Tibial artery (tissue), 4 donors: ENCODE measurements at regions of chr15 and their contacts with region 1.

Region 1: DNA sequence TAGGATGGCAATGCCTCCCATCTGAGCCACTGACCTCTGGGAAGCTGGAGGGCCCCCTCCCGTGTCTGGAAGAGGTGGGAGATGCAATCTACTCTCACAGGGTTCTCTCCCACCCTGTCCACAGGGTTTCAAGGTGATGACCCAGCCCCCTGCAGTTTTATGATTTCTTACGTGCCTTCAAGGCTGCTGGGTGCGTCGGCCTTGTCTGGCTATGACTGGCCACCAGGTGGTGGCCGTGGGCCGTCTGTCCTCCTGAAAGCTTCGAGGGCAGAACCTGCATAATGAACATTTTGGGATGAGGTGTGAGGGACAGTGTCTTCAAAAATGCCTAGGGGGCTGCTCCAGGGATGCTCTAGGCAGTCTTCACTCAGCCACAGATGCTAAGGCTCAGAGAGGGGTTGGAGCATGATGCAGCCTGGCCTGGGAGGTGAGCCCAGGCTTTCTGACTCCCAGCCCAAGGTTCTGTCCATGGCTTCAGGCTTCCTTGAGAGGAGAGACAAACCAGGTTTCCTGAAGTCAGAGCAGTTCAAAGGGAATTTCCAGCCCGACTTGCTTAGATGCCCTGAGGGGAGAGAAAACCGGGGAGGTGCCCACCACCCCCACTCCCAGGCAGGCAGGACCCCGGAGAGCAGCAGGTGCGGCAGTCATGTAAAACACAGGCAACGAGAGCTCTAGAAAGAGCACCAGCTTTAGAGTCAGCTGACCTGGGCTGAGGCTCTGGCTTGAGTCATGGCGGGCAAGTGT is 18.7 kb downstream of the ISG20 start:
- DNase-seq: peak in 1 of 2 donors; percentile 71
- H3K4me3 ChIP-seq: no peak overlapping the region
- H3K27ac ChIP-seq: peak overlapping the region in 1 of 2 donors; percentile 68
- H3K4me1 ChIP-seq: peaks cover 0 to 53% (median 32%) of the 10 kb centered on the region in 4 donors
- H3K27me3 ChIP-seq: no peaks in the 10 kb centered on the region
- CTCF ChIP-seq: peak; percentile 91 to 92

Region 2: GRCh38 chr15:88704791-88705768 is 47.6 kb after region 1 on chr15:
- intact Hi-C with region 1: loop called (anchors 5 kb)
- DNase-seq: peak; percentile 65 to 90
- H3K4me3 ChIP-seq: peak overlapping the region; percentile 51 to 64
- H3K27ac ChIP-seq: peak overlapping the region; percentile 85 to 90
- H3K4me1 ChIP-seq: peaks cover 0 to 33% (median 20%) of the 10 kb centered on the region in 4 donors
- H3K27me3 ChIP-seq: no peaks in the 10 kb centered on the region
- CTCF ChIP-seq: no peak

Region 3: GRCh38 chr15:88800026-88800425 is 142.5 kb after region 1 on chr15:
- intact Hi-C with region 1: loop called (anchors 10 kb)
- DNase-seq: no peak
- H3K4me3 ChIP-seq: no peak overlapping the region
- H3K27ac ChIP-seq: no peak overlapping the region
- H3K4me1 ChIP-seq: peaks cover 0 to 29% (median 11%) of the 10 kb centered on the region in 4 donors
- H3K27me3 ChIP-seq: peaks cover 0 to 11% of the 10 kb centered on the region in 2 donors
- CTCF ChIP-seq: no peak

Region 4: GRCh38 chr15:88834211-88834812 is 176.8 kb after region 1 on chr15:
- intact Hi-C with region 1: loop called (anchors 1 kb)
- DNase-seq: peak; percentile 52 to 83
- H3K4me3 ChIP-seq: no peak overlapping the region
- H3K27ac ChIP-seq: peak overlapping the region; percentile 78 to 85
- H3K4me1 ChIP-seq: peaks cover 0 to 23% (median 16%) of the 10 kb centered on the region in 4 donors
- H3K27me3 ChIP-seq: no peaks in the 10 kb centered on the region
- CTCF ChIP-seq: peak; percentile 79 to 84

Region 5: GRCh38 chr15:89130201-89130600 is 472.7 kb after region 1 on chr15:
- intact Hi-C with region 1: loop called (anchors 5 kb)
- DNase-seq: no peak
- H3K4me3 ChIP-seq: no peak overlapping the region
- H3K27ac ChIP-seq: peak overlapping the region; percentile 3 to 39
- H3K4me1 ChIP-seq: peaks cover 0 to 94% (median 18%) of the 10 kb centered on the region in 4 donors
- H3K27me3 ChIP-seq: no peaks in the 10 kb centered on the region
- CTCF ChIP-seq: no peak